ENCODE measurements at regions of chr1 and their contacts with region 1.

Region 1: DNA sequence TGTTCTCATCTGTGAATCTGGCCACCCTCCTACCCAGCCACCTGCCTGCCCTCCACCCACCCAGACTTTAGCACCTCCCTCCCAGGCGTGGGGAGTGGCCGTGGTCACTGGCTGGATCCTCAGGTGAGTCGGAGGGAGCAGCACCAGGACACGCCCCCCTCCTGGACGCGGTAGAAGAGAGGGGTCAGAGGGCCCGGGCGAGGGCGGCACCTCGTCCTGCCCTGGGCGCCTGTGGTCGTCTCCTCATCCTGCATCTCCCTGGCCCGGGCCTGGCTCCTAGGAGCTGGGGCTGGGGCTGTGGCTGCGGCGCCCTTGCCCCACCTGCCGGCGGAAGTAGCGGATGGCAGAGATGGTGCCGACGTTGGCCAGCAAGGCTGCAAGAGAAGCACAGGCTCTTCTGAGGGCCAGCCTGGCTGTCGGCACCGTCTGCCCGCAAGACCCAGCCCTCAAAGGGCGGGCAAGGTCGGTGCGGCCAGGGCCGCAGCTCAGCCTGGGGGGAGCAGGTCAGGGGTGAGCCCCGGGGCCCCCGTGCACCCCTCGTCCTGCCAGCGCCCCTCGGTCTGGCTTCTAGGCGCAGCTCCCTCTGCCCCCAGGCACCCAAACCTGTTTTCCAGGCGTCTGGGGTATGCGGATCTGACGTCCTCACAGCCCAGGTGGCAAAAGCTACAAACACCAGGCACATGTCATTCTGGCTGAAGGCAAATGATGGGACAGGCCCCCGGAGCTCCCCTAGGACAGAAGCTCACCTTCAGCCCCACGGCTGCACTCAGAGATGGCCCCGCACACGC is 5.8 kb downstream of the PERM1 start:
- DNase-seq: no peak
- H3K4me3 ChIP-seq: peak overlapping the region; percentile 42
- H3K27me3 ChIP-seq: no peaks in the 10 kb centered on the region
- CTCF ChIP-seq: peak; percentile 80

Region 2: DNA sequence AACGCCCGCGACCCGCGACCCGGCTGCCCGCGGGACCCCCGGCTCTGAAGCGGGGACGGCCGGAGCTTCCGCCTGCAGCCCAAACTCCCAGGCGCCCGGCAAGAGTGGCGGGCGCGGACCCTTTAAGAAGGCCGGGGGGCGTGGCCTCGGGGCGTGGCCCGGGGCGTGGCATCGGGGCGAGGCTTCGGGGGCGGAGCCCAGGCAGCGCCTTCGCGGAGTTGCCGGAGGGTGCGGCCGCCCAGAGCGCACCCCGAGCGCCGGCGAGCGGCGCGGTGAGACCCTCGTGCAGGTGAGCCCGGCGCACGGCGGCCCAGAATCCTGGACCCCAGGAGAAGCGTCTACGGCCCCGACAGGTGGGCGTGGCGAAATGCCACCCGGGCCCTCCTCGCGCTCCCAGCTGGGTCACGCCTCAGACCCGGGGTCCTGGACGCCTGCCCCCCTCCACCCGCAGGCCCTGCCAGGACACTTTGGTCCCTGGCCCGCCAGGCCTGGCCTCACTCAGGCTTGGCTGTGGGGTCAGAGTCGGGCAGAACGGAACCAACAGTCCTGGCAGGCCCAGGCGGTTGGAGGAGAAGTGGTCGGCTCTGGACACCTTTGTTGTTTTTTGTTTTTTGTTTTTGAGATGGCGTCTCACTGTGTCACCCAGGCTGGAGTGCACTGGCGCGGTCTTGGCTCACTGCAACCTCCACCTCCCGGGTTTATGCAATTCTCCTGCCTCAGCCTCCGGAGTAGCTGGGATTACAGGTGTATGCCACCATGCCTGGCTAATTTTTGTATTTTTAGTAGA is 83.6 kb after region 1 on chr1:
- CTCF ChIA-PET with region 1: interaction called, 157 read pairs
- POLR2A ChIA-PET with region 1: no interaction called
- DNase-seq: no peak
- H3K4me3 ChIP-seq: peak overlapping the region; percentile 49
- H3K27me3 ChIP-seq: no peaks in the 10 kb centered on the region; the same call in 1 of the 2 replicates
- CTCF ChIP-seq: no peak

Measured in BJ (cell line).